OCI-LY7 (cell line): ENCODE measurements at regions of chr11 and their contacts with region 1.

Region 1: GRCh38 chr11:125429166-125429707 is 66.8 kb downstream of the FEZ1 start:
- DNase-seq: peak; percentile 77
- H3K4me3 ChIP-seq: no peak overlapping the region
- H3K27ac ChIP-seq: no peak overlapping the region
- H3K4me1 ChIP-seq: peaks cover 5% of the 10 kb centered on the region
- CTCF ChIP-seq: peak; percentile 82

Region 2: GRCh38 chr11:124961972-124962609 is 467.1 kb before region 1 on chr11:
- CTCF ChIA-PET with region 1: no interaction called
- POLR2A ChIA-PET with region 1: no interaction called
- intact Hi-C with region 1: loop called (anchors 10 kb)
- DNase-seq: peak; percentile 73
- H3K4me3 ChIP-seq: no peak overlapping the region
- H3K27ac ChIP-seq: no peak overlapping the region
- H3K4me1 ChIP-seq: no peaks in the 10 kb centered on the region
- CTCF ChIP-seq: peak; percentile 93